ENCODE measurements at regions of chr4 and their contacts with region 1.

Region 1: GRCh38 chr4:6333301-6334202 is 63.9 kb downstream of the WFS1 start:
- DNase-seq: no peak
- H3K4me3 ChIP-seq: no peak overlapping the region
- H3K27ac ChIP-seq: no peak overlapping the region
- H3K4me1 ChIP-seq: no peaks in the 10 kb centered on the region
- H3K27me3 ChIP-seq: peaks cover 0 to 32% of the 10 kb centered on the region in 2 donors
- CTCF ChIP-seq: no peak
- POLR2A ChIP-seq: no peak

Region 2: DNA sequence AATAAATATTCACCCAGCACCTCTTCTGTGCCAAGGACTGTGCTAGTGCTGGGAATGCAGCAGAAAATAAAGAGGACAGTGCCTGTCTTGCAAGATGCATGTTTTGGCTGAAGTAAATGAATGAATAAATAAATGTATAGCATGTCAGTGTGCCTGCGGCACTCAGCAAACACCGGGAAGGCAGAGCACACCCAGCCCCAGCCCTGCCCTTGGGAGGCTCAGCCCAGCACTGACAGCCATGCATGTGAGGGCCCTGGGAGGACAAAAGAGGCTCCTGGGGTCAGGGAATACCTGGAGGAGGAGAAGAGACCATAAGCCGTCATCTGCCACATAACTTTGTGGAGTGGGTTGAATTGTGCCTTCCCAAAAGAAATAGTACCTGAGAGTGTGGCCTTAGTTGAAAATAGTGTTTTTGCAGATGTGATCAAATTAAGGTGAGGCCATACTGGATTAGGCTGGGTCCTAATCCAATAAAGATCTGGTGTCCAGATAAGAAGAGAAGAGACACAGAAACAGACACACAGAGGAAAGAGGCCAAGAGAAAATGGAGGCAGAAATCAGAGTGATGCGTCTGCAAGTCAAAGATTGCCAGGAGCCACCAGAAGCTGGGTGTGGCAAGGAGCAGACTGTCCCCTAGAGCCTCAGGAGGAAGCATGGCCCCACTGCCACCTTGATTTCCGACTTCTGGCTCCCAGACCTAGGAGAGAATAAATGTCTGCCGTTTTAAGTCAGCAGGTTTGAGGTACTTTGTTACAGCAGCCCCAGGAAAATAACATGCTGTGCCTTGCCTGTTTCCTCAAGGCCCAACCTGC is 331.7 kb before region 1 on chr4:
- intact Hi-C with region 1: loop called (anchors 2 kb)
- DNase-seq: no peak
- H3K4me3 ChIP-seq: no peak overlapping the region
- H3K27ac ChIP-seq: no peak overlapping the region
- H3K4me1 ChIP-seq: no peaks in the 10 kb centered on the region
- H3K27me3 ChIP-seq: peaks cover 0 to 43% of the 10 kb centered on the region in 2 donors
- CTCF ChIP-seq: no peak
- POLR2A ChIP-seq: no peak

Region 3: DNA sequence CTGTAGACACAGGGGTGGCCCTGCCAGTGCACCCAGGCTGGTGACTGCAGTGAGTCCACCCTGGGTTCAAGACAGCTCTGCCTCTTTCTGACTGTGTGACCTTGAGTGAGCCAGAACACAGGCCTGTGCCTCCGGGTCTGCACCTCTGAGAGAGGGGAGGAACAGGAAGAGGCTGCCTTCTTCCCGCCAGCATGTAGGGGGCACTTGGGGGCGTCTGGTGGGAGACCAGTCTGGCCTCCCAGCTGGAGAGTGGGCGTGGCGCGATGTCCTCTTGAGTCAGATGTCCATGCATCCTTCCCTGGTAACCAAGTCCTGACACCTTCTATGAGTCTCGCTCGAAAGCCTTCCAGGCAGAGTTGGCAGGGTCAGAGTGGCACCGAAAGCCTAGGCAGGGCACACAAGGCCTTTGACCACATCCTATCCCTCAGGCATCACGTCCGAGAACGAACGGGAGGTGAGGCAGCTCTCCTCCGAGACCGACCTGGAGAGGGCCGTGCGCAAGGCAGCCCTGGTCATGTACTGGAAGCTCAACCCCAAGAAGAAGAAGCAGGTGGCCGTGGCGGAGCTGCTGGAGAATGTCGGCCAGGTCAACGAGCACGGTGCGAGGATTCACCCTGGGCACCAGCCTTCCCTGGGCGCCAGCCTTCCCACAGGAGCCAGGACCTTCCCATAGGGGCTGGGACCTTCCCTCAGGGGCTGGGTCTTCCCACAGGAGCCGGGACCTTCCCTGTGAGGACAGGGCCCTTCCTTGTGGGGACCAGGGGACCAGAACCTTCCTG is 42.6 kb before region 1 on chr4:
- intact Hi-C with region 1: no loop called
- DNase-seq: no peak
- H3K4me3 ChIP-seq: no peak overlapping the region
- H3K27ac ChIP-seq: no peak overlapping the region
- H3K4me1 ChIP-seq: no peaks in the 10 kb centered on the region
- H3K27me3 ChIP-seq: no peaks in the 10 kb centered on the region
- CTCF ChIP-seq: no peak
- POLR2A ChIP-seq: no peak

Region 4: GRCh38 chr4:6319530-6320150 is 13.9 kb before region 1 on chr4:
- intact Hi-C with region 1: loop called (anchors 2 kb)
- DNase-seq: no peak
- H3K4me3 ChIP-seq: no peak overlapping the region
- H3K27ac ChIP-seq: no peak overlapping the region
- H3K4me1 ChIP-seq: no peaks in the 10 kb centered on the region
- H3K27me3 ChIP-seq: no peaks in the 10 kb centered on the region
- CTCF ChIP-seq: no peak
- POLR2A ChIP-seq: no peak